ENCODE measurements at regions of chr12 and their contacts with region 1.

Region 1: DNA sequence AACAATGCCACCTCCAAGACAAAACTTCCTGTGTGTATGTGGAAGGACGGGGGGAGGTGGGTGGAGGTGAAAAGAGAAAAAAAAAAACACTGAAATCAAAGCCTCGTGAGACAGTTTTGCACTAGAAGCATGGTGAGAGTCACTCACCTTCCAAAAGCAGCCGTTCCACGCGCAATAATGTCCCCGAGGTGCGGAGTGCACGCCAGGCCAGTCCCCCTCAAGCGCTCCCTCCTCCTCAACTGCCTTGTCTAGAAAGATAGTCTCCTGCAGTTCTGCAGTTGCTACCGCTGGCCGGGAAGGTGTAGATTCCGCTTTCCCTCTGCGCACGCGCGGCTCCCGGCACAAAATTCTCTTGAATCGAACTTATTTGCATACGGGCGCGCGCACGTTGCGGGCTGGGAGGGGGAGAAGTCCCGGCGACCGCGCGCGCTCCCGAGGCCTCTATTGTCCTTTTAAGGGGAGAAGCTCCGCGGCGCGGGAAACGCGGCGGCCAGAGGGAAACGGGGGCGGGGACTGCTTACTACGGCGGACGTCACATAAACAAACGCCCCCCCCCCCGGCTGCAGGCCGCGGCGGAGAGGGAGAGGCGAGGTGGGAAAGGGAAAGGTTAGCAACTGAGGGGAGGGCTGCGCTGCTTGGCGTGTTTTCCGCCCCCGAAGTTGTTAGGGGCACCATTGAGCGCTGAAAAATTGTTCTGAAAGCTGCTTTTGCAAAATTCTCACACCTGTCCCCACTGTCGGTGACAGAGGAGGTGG is at the start of gene SINHCAF:
- DNase-seq: peak; percentile 99
- H3K4me3 Mint-ChIP-seq: peak within 1 kb of the TSS; percentile 96
- H3K27ac Mint-ChIP-seq: peak within 1 kb of the TSS; percentile 99
- H3K4me1 Mint-ChIP-seq: peaks cover 20% of the 10 kb centered on the region
- H3K27me3 Mint-ChIP-seq: no peaks in the 10 kb centered on the region
- total RNA-seq, gene SINHCAF: 158 to 169 TPM

Region 2: GRCh38 chr12:30695199-30696103 is 630.6 kb before region 1 on chr12 and contains the start of gene IPO8:
- CTCF ChIA-PET with region 1: no interaction called
- intact Hi-C with region 1: loop called (anchors 5 kb)
- DNase-seq: peak; percentile 89
- H3K4me3 Mint-ChIP-seq: peak within 1 kb of the TSS; percentile 93
- H3K27ac Mint-ChIP-seq: peak within 1 kb of the TSS; percentile 92
- H3K4me1 Mint-ChIP-seq: peaks cover 38% of the 10 kb centered on the region
- H3K27me3 Mint-ChIP-seq: peaks cover 2% of the 10 kb centered on the region
- total RNA-seq, gene IPO8: 36.0 to 41.5 TPM

Region 3: DNA sequence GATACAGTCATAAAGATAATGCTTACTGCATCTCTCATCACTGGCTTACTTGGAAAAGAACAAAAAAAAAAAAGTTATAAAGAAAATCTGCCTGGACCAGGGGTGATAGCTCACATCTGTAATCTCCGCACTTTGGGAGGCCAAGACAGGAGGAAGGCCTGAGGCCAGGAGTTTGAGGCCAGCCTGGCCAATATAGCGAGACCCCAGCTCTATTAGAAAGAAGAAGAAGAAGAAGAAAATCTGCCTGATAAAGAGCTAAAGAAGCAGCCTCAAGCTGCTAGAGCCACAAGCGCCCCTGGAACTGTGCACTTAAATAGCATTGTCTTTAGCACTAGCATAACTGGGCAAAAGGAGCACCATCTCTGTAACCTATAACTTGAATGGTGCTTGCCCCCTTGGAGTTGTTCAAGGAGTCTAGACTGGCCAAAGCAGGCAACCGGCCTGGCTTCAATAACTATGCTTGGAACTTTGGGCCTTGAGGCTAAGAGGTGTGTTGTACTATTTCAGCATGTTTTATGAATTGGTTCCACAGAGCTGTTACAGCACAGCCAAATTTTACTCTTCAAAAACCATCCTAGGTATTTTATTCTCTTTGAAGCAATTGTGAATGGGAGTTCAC is 53.3 kb before region 1 on chr12:
- CTCF ChIA-PET with region 1: interaction called, 6 read pairs
- intact Hi-C with region 1: loop called (anchors 2 kb)
- DNase-seq: no peak
- H3K4me3 Mint-ChIP-seq: no peak overlapping the region
- H3K27ac Mint-ChIP-seq: no peak overlapping the region
- H3K4me1 Mint-ChIP-seq: no peaks in the 10 kb centered on the region
- H3K27me3 Mint-ChIP-seq: no peaks in the 10 kb centered on the region

Region 4: DNA sequence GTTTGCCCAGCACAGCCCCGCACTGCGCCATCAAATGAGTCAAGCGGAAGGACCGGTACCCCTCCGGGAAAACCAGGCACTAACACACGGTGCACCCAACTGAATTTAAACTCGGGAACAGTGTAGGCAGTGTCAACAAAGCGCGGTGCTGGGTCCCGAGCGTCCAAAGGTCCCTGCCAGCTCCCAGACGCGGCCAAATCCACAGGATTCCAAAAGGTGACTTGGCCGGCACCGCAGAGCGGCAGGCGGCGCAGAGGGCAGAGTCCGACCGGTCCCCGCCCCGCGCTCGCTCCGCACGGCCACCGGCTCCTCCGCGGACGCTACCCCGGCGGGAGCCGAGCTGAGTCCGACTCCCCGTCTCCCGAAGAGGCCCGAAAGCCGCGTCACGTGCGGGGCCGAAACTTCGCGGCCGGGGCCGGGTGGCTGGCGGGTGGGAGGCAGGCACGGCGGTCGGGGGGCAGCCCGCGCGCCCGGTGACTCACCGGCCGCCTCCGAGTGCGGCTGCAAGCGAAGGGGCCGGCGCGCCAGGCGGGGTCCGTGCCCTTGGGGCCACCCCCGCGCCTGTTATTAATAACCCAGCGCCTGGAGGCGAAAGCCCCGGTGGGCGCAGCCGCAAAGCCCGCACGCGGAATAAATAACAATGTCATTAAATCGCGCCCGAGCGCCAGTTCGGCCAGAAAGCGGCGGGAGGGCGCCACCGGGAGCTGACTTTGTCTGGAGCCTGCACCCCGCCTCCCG is 264.0 kb after region 1 on chr12:
- CTCF ChIA-PET with region 1: no interaction called
- intact Hi-C with region 1: loop called (anchors 2 kb)
- DNase-seq: peak; percentile 26
- H3K4me3 Mint-ChIP-seq: peak overlapping the region; percentile 77
- H3K27ac Mint-ChIP-seq: no peak overlapping the region
- H3K4me1 Mint-ChIP-seq: peaks cover 9% of the 10 kb centered on the region
- H3K27me3 Mint-ChIP-seq: peaks cover 45% of the 10 kb centered on the region

Region 5: GRCh38 chr12:32139064-32139421 is 813.0 kb after region 1 on chr12:
- CTCF ChIA-PET with region 1: no interaction called
- intact Hi-C with region 1: loop called (anchors 1 kb)
- DNase-seq: peak; percentile 74
- H3K4me3 Mint-ChIP-seq: peak overlapping the region; percentile 71
- H3K27ac Mint-ChIP-seq: no peak overlapping the region
- H3K4me1 Mint-ChIP-seq: peaks cover 24% of the 10 kb centered on the region
- H3K27me3 Mint-ChIP-seq: peaks cover 2% of the 10 kb centered on the region

Region 6: GRCh38 chr12:32679091-32679919 is 1353.3 kb after region 1 on chr12 and contains the start of gene DNM1L:
- CTCF ChIA-PET with region 1: no interaction called
- intact Hi-C with region 1: loop called (anchors 10 kb)
- DNase-seq: peak; percentile 94
- H3K4me3 Mint-ChIP-seq: peak within 1 kb of the TSS; percentile 81
- H3K27ac Mint-ChIP-seq: peak within 1 kb of the TSS; percentile 82
- H3K4me1 Mint-ChIP-seq: peaks cover 24% of the 10 kb centered on the region
- H3K27me3 Mint-ChIP-seq: no peaks in the 10 kb centered on the region
- total RNA-seq, gene DNM1L: 54.4 to 61.5 TPM